ENCODE measurements at regions of chr2 and their contacts with region 1.

Region 1: DNA sequence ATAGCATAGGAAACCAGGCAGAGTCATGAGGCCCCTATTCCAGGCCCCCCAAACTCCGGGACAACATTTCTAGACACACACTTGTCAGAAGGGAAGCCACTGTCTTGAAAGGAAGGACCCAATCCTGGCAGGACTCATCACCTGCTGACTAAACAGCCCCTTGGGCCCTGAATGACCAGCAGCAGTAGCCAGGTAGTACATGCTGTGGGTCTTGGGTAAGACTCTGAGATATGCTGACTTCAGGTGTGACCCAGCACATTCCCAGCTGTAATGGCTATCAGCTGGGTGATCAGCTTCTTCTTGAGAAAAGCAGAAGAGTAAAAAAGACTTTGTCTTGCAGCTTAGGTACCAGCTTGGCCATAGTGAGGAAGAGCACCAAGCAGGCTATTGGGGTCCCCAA is 35.6 kb downstream of the CLHC1 start:
- DNase-seq: no peak
- H3K4me3 ChIP-seq: no peak overlapping the region
- H3K27ac ChIP-seq: no peak overlapping the region
- H3K27me3 ChIP-seq: no peaks in the 10 kb centered on the region
- CTCF ChIP-seq: no peak

Region 2: DNA sequence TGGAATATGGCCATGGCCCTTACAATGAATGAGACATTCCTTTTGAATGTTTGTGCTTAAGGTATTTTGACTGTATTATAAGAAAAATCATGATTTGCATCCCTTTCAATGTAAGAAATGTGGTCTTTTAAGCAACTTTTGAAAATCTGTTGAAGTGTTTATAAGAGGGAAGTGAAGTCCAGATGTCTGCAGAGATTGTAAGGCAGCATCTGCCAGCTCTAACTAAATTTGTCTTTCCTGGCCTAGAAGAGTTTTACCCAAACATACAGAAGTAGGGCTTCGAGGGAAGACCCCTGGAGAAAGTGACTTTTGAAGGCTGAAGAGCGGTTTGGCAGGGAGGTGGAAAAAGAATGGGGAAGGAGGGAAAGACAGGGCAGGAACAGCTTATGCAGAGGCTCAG is 460.9 kb before region 1 on chr2:
- intact Hi-C with region 1: loop called in 1 of 2 experiments (anchors 10 kb)
- DNase-seq: no peak
- H3K4me3 ChIP-seq: no peak overlapping the region
- H3K27ac ChIP-seq: no peak overlapping the region
- H3K27me3 ChIP-seq: no peaks in the 10 kb centered on the region
- CTCF ChIP-seq: no peak

Region 3: DNA sequence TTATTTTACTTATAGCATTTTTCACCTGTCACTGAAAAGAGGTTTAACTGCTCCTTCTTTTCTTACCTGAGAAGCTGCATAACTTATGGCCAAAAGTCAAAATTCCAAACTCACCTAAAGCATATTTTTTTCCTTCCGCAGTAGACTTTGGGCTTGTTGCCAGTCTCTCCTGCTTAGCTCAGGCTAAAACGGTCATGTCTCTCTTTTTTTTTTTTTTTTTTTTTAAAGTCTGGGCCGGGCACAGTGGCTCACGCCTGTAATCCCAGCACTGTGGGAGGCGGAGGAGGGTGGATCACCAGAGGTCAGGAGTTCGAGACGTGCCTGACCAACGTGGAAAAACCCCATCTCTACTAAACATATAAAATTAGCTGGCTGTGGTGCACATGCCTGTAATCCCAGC is 259.7 kb before region 1 on chr2:
- intact Hi-C with region 1: no loop called
- DNase-seq: no peak
- H3K4me3 ChIP-seq: no peak overlapping the region
- H3K27ac ChIP-seq: no peak overlapping the region
- H3K27me3 ChIP-seq: no peaks in the 10 kb centered on the region
- CTCF ChIP-seq: no peak

Region 4: GRCh38 chr2:55088400-55088799 is 108.1 kb before region 1 on chr2:
- intact Hi-C with region 1: no loop called
- DNase-seq: no peak
- H3K4me3 ChIP-seq: no peak overlapping the region
- H3K27ac ChIP-seq: peak overlapping the region in 5 of 59 donors; percentile 3 to 45 (median 13)
- H3K27me3 ChIP-seq: no peaks in the 10 kb centered on the region
- CTCF ChIP-seq: no peak

Region 5: DNA sequence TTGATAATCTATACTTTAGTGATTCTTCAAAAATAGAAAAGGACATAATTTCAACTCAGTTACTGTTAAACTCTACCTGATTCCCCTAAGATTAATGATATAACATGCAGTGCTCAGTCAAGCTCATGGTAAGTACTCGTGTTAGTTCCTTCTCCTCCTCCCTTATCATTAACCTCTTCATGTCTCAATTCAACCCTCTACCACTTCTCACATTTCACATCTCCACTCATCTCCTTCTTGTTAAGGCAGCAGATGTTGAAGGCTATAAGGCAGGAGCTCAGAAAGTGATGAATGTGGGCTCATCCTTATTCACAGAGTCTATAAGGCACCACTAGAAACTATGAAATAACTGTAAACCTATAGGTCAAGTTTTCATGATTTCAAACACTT is 20.5 kb before region 1 on chr2:
- intact Hi-C with region 1: no loop called
- DNase-seq: no peak
- H3K4me3 ChIP-seq: peak overlapping the region in 40 of 59 donors; percentile 1 to 50 (median 26)
- H3K27ac ChIP-seq: peak overlapping the region in 10 of 59 donors; percentile 2 to 49 (median 21)
- H3K27me3 ChIP-seq: no peaks in the 10 kb centered on the region
- CTCF ChIP-seq: no peak